ENCODE measurements at regions of chr9 and their contacts with region 1.

Region 1: GRCh38 chr9:126398403-126399058 is 71.9 kb downstream of the MVB12B start:
- DNase-seq: peak in 1 of 2 experiments; percentile 97
- H3K4me3 ChIP-seq: no peak overlapping the region
- H3K27ac ChIP-seq: no peak overlapping the region
- H3K4me1 ChIP-seq: no peaks in the 10 kb centered on the region; a peak in 1 of 7 replicates
- H3K27me3 ChIP-seq: no peaks in the 10 kb centered on the region
- CTCF ChIP-seq: peak; percentile 97 to 99 (median 99)
- EP300 ChIP-seq: no peak
- POLR2A ChIP-seq: no peak
- RAD21 ChIP-seq: peak; percentile 97 to 99

Region 2: GRCh38 chr9:126301985-126302603 is 96.4 kb before region 1 on chr9:
- CTCF ChIA-PET with region 1: interaction called, 108 read pairs
- POLR2A ChIA-PET with region 1: no interaction called
- DNase-seq: peak; percentile 31 to 57
- H3K4me3 ChIP-seq: no peak overlapping the region
- H3K27ac ChIP-seq: no peak overlapping the region
- H3K4me1 ChIP-seq: no peaks in the 10 kb centered on the region; a peak in 1 of 7 replicates
- H3K27me3 ChIP-seq: no peaks in the 10 kb centered on the region
- CTCF ChIP-seq: peak; percentile 62 to 88 (median 84)
- EP300 ChIP-seq: no peak
- POLR2A ChIP-seq: no peak
- RAD21 ChIP-seq: peak; percentile 74 to 83

Region 3: DNA sequence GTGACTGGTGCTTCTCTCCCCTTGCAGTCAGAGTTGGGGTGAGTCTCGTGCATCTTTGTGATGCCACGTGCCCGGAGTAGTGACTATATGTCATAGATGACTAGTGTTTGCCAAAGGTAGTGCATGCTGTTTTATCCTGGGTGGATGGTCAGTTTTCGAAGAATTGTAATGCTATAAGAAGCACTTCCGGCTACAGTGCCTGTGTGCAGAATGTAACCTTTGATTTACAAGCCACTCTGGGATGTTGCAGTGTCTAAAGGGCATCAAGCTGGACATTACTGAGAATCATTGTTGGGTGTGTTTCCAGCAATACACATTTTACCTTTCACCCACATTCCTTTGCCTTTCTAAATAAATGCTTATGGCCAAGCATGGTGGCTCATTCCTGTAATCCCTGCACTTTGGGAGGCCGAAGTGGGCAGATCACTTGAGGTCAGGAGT is 55.2 kb before region 1 on chr9:
- CTCF ChIA-PET with region 1: interaction called, 24 read pairs
- POLR2A ChIA-PET with region 1: no interaction called
- DNase-seq: no peak
- H3K4me3 ChIP-seq: no peak overlapping the region
- H3K27ac ChIP-seq: no peak overlapping the region
- H3K4me1 ChIP-seq: peaks cover 3 to 14% (median 11%) of the 10 kb centered on the region in 4 experiments
- H3K27me3 ChIP-seq: 0 out of 7 replicates have a peak, but pooled peaks cover 0 to 2% (median 0%) of the 10 kb centered on the region in 4 experiments
- CTCF ChIP-seq: no peak
- EP300 ChIP-seq: no peak
- POLR2A ChIP-seq: no peak
- RAD21 ChIP-seq: no peak

Region 4: DNA sequence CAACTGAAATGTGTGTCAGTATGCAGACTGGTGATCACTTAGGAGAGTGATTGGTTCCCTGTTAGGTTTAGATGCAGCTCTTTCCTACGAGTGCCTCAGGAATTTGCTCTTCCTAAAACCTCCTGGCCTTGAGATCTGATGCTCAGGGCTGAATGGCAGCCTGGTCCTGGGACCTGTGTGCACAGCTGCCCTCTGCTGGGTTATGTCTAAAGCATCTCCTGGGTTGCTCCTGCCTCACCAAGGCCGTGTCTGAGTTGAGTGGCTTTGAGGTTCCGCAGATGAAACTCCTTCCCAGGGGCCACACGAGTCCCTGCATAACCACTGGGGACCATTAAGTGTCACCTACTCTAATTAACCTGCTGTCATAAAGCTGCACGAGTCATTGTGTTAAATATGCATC is 12.4 kb before region 1 on chr9:
- CTCF ChIA-PET with region 1: interaction called, 54 read pairs
- POLR2A ChIA-PET with region 1: interaction called, 3 read pairs
- DNase-seq: no peak
- H3K4me3 ChIP-seq: no peak overlapping the region
- H3K27ac ChIP-seq: no peak overlapping the region
- H3K4me1 ChIP-seq: no peaks in the 10 kb centered on the region; a peak in 1 of 7 replicates
- H3K27me3 ChIP-seq: no peaks in the 10 kb centered on the region
- CTCF ChIP-seq: peak; percentile 56 to 64 (median 61)
- EP300 ChIP-seq: no peak
- POLR2A ChIP-seq: no peak
- RAD21 ChIP-seq: peak; percentile 69 to 76

Region 5: DNA sequence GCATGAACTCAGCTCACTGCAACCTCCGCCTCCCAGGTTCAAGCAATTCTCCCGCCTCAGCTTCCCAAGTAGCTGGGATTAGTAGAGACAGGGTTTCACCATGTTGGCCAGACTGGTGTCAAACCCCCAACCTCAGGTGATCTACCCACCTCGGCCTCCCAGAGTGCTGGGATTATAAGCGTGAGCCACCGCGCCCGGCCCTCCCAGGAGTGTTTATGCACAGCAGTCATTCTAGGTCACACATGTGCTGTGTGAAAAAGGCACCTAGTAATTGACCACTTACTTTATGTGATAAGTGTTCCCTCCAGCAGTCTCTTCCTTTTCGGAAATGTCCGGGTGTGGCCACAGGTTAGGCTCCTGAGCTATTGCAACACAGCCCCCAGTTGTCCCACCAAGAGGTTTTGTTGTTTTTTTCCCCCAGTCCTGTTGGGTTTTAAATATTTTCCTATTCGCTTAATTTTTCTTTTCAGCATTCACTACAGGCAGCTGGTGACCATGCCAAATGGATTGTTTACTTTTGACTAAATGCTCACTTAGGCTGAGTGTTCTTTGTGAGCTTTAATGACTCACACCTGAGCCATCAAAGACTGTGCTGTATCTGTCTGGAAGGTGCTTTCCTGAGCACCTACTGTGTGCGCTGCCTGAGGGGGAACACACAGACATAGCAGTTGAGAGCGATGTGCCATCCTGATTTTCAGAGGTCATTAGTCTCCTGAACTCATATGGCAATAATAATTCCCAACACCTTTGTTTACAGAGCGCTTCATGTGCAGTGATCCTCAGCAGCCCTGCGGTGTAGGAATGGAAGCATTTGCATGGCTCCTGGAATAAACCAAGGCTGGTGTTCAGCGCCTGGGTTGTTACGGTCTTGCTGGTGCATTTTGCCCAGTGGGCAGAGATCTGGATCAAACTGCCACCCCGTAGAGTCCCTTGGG is 22.4 kb after region 1 on chr9:
- CTCF ChIA-PET with region 1: interaction called, 21 read pairs
- POLR2A ChIA-PET with region 1: no interaction called
- DNase-seq: no peak
- H3K4me3 ChIP-seq: no peak overlapping the region
- H3K27ac ChIP-seq: no peak overlapping the region
- H3K4me1 ChIP-seq: peaks cover 11 to 16% (median 14%) of the 10 kb centered on the region in 4 experiments
- H3K27me3 ChIP-seq: no peaks in the 10 kb centered on the region; a peak in 2 of 7 replicates
- CTCF ChIP-seq: no peak
- EP300 ChIP-seq: no peak
- POLR2A ChIP-seq: no peak
- RAD21 ChIP-seq: no peak

Region 6: DNA sequence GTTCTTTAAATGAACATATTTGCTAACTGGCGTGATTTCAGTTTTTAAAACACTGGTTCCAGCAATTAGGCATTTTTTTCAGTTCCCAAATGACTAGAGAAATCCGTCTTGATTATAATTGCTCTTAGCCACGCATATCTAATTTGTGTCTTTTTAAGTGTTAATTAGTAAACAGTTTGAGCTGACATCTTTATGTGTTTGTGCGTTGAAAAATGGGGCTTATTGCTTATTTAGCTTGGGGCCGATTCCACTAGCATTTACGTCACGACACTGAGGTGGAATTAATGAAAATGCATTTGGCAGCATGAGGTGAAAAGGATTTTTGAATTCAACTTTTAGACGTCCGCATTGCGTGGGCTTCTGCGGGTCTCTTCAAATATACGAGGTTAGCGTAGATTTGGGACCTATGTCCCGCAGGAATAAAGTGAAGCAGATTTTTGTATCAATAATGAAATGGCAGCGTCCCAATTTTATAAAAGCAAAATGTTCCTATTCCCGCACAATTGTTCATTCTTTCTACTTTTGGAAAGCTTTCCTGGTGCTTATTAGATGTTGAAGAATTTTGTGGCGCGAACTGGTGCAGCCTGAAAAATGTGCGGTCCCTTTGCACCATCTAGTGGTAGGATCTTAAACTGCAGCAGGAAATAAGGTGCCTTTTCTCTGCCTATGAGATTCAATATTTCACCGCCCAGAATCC is 92.5 kb after region 1 on chr9:
- CTCF ChIA-PET with region 1: interaction called, 31 read pairs
- POLR2A ChIA-PET with region 1: no interaction called
- DNase-seq: no peak
- H3K4me3 ChIP-seq: no peak overlapping the region
- H3K27ac ChIP-seq: no peak overlapping the region
- H3K4me1 ChIP-seq: no peaks in the 10 kb centered on the region; a peak in 1 of 7 replicates
- H3K27me3 ChIP-seq: no peaks in the 10 kb centered on the region
- CTCF ChIP-seq: peak; percentile 46 to 80 (median 77)
- EP300 ChIP-seq: no peak
- POLR2A ChIP-seq: no peak
- RAD21 ChIP-seq: peak; percentile 94 to 95

Region 7: GRCh38 chr9:126893079-126893478 is 494.5 kb after region 1 on chr9:
- CTCF ChIA-PET with region 1: no interaction called
- POLR2A ChIA-PET with region 1: no interaction called
- DNase-seq: no peak
- H3K4me3 ChIP-seq: no peak overlapping the region
- H3K27ac ChIP-seq: no peak overlapping the region
- H3K4me1 ChIP-seq: no peaks in the 10 kb centered on the region
- H3K27me3 ChIP-seq: no peaks in the 10 kb centered on the region
- CTCF ChIP-seq: peak in 2 of 3 experiments; percentile 54 to 67; a peak in 2 of 4 replicates
- EP300 ChIP-seq: no peak
- POLR2A ChIP-seq: no peak
- RAD21 ChIP-seq: peak; percentile 62 to 70